Caco-2 (cell line): ENCODE measurements at regions of chr15 and their contacts with region 1.

Region 1: DNA sequence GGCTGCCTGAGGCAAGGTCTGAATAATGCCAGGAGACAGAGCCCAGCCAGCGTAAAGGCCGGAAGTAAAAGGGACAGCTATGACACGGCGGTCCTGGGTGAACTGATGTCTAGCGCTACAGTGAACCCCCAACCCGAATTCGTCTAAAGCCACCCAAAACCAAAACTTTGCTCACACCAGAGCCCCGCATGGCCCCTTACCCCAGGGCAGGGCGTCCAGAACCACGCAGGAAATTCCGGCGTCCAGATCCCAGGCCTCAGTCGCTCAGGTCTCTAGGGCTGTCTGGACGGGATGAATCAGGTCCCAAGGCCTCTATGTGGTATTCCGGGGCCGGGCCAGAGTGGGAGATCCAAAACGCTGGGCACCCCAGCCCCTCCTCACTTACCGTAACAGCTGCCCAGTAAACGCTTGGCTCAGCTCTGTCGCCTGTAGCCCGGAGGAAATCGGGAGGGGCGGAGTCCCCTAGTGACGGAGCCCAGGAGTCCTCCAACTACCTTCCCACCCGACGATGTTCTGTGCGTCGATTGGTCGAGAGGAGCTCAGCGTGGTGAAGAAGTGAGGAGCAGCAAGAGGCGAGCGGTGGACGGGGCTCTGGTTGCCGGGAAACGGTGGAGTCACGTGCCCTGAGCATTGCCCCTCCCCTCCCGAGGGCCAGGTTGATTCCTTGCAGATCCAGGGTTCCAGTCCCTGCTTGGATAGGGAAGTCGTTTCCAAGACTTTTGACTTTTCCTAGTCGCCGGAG is at the start of gene CCDC32:
- DNase-seq: peak; percentile 97 to 99
- H3K4me3 ChIP-seq: peak within 1 kb of the TSS; percentile 69
- H3K4me3 Mint-ChIP-seq: peak within 1 kb of the TSS; percentile 87
- H3K27ac Mint-ChIP-seq: peak within 1 kb of the TSS; percentile 94
- H3K4me1 ChIP-seq: no peaks in the 10 kb centered on the region
- H3K4me1 Mint-ChIP-seq: peaks cover 16% of the 10 kb centered on the region
- H3K27me3 ChIP-seq: no peaks in the 10 kb centered on the region
- H3K27me3 Mint-ChIP-seq: no peaks in the 10 kb centered on the region
- CTCF ChIP-seq: no peak
- total RNA-seq, gene CCDC32: 11.7 and 17.0 TPM in 2 replicates

Region 2: DNA sequence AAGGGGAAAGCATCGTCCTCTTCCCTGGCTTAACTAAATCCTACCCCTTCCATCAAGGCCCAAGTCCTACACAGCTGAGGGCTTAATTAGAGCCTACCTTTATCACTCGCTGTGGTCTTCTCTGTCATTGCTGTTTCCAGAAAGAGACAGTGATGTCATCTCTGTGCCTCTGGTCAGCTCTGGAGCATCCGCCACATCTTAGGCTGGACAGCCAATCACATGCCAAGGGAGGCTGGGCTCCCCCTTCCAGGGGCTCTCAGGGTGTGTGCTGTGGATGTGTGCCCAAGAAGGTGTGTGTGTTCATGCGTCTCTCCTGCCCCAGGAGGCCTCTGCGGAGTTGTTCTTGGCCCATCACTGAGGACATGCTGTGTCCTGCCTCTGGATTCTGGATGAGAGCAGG is 51.2 kb before region 1 on chr15:
- CTCF ChIA-PET with region 1: interaction called, 3 read pairs
- POLR2A ChIA-PET with region 1: no interaction called
- intact Hi-C with region 1: loop called (anchors 2 kb)
- DNase-seq: no peak
- H3K4me3 ChIP-seq: no peak overlapping the region
- H3K4me3 Mint-ChIP-seq: no peak overlapping the region
- H3K27ac Mint-ChIP-seq: no peak overlapping the region
- H3K4me1 ChIP-seq: 0 out of 2 replicates have a peak, but pooled peaks cover 6% of the 10 kb centered on the region
- H3K4me1 Mint-ChIP-seq: peaks cover 21% of the 10 kb centered on the region
- H3K27me3 ChIP-seq: no peaks in the 10 kb centered on the region; the same call in 1 of the 2 replicates
- H3K27me3 Mint-ChIP-seq: peaks cover 4% of the 10 kb centered on the region
- CTCF ChIP-seq: no peak

Region 3: GRCh38 chr15:40582726-40583246 is 18.0 kb after region 1 on chr15:
- CTCF ChIA-PET with region 1: interaction called, 11 read pairs
- POLR2A ChIA-PET with region 1: interaction called, 13 read pairs
- intact Hi-C with region 1: loop called (anchors 1 kb)
- DNase-seq: peak; percentile 81 to 85
- H3K4me3 ChIP-seq: peak overlapping the region; percentile 42
- H3K4me3 Mint-ChIP-seq: peak overlapping the region; percentile 87
- H3K27ac Mint-ChIP-seq: peak overlapping the region; percentile 88
- H3K4me1 ChIP-seq: 0 out of 2 replicates have a peak, but pooled peaks cover 3% of the 10 kb centered on the region
- H3K4me1 Mint-ChIP-seq: peaks cover 7% of the 10 kb centered on the region
- H3K27me3 ChIP-seq: no peaks in the 10 kb centered on the region
- H3K27me3 Mint-ChIP-seq: no peaks in the 10 kb centered on the region
- CTCF ChIP-seq: no peak

Region 4: GRCh38 chr15:40593588-40594428 is 29.0 kb after region 1 on chr15 and contains the start of gene KNL1:
- CTCF ChIA-PET with region 1: interaction called, 15 read pairs
- POLR2A ChIA-PET with region 1: interaction called, 12 read pairs
- intact Hi-C with region 1: no loop called
- DNase-seq: peak; percentile 89 to 94
- H3K4me3 ChIP-seq: peak within 1 kb of the TSS; percentile 93
- H3K4me3 Mint-ChIP-seq: peak within 1 kb of the TSS; percentile 99
- H3K27ac Mint-ChIP-seq: peak within 1 kb of the TSS; percentile 100
- H3K4me1 ChIP-seq: peaks cover 8% of the 10 kb centered on the region; the same call in 1 of the 2 replicates
- H3K4me1 Mint-ChIP-seq: peaks cover 29% of the 10 kb centered on the region
- H3K27me3 ChIP-seq: no peaks in the 10 kb centered on the region
- H3K27me3 Mint-ChIP-seq: no peaks in the 10 kb centered on the region
- CTCF ChIP-seq: no peak
- total RNA-seq, gene KNL1: 24.8 and 29.5 TPM in 2 replicates

Region 5: DNA sequence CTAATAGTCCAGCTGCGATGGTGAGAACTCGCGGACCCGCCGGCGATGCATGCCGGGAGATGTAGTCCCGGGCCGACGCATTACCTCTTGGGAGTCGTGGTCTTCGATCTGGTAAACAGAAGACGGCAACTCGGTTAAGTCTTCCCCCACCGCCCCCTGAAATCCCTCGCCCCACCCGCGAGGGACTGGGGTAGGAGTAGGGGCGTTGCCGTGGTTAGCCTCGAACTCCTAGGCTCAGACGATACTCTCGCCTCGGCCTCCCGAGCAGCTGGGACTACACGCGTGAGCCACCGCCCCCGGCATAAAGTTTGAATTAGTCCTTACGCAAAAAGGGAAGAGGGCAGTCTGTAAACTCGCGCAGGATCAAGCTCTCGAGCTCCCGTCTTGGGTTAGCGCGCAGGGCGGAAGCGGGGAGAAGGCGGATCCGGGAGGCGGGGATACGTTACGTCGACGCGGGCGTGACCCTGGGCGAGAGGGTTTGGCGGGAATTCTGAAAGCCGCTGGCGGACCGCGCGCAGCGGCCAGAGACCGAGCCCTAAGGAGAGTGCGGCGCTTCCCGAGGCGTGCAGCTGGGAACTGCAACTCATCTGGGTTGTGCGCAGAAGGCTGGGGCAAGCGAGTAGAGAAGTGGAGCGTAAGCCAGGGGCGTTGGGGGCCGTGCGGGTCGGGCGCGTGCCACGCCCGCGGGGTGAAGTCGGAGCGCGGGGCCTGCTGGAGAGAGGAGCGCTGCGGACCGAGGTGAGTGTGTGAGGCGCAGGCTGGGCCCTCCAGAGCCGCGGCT is 130.1 kb after region 1 on chr15 and contains the start of gene RAD51:
- CTCF ChIA-PET with region 1: no interaction called
- POLR2A ChIA-PET with region 1: interaction called, 10 read pairs
- intact Hi-C with region 1: no loop called
- DNase-seq: peak; percentile 93 to 95
- H3K4me3 ChIP-seq: peak within 1 kb of the TSS; percentile 83
- H3K4me3 Mint-ChIP-seq: peak within 1 kb of the TSS; percentile 92
- H3K27ac Mint-ChIP-seq: peak within 1 kb of the TSS; percentile 99
- H3K4me1 ChIP-seq: peaks cover 11% of the 10 kb centered on the region; the same call in 1 of the 2 replicates
- H3K4me1 Mint-ChIP-seq: peaks cover 7% of the 10 kb centered on the region
- H3K27me3 ChIP-seq: no peaks in the 10 kb centered on the region
- H3K27me3 Mint-ChIP-seq: no peaks in the 10 kb centered on the region
- CTCF ChIP-seq: no peak
- total RNA-seq, gene RAD51: 37.8 and 47.0 TPM in 2 replicates

Region 6: GRCh38 chr15:40763801-40764732 is 199.3 kb after region 1 on chr15 and contains the start of gene GCHFR:
- CTCF ChIA-PET with region 1: no interaction called
- POLR2A ChIA-PET with region 1: interaction called, 5 read pairs
- intact Hi-C with region 1: loop called (anchors 10 kb)
- DNase-seq: peak; percentile 90 to 93
- H3K4me3 ChIP-seq: peak within 1 kb of the TSS; percentile 92
- H3K4me3 Mint-ChIP-seq: peak within 1 kb of the TSS; percentile 86
- H3K27ac Mint-ChIP-seq: peak within 1 kb of the TSS; percentile 90
- H3K4me1 ChIP-seq: peaks cover 7% of the 10 kb centered on the region; the same call in 1 of the 2 replicates
- H3K4me1 Mint-ChIP-seq: peaks cover 11% of the 10 kb centered on the region
- H3K27me3 ChIP-seq: no peaks in the 10 kb centered on the region
- H3K27me3 Mint-ChIP-seq: no peaks in the 10 kb centered on the region
- CTCF ChIP-seq: peak; percentile 17 to 49
- total RNA-seq, gene GCHFR: 54.4 and 59.2 TPM in 2 replicates